ENCODE measurements at regions of chr2 and their contacts with region 1.

Region 1: DNA sequence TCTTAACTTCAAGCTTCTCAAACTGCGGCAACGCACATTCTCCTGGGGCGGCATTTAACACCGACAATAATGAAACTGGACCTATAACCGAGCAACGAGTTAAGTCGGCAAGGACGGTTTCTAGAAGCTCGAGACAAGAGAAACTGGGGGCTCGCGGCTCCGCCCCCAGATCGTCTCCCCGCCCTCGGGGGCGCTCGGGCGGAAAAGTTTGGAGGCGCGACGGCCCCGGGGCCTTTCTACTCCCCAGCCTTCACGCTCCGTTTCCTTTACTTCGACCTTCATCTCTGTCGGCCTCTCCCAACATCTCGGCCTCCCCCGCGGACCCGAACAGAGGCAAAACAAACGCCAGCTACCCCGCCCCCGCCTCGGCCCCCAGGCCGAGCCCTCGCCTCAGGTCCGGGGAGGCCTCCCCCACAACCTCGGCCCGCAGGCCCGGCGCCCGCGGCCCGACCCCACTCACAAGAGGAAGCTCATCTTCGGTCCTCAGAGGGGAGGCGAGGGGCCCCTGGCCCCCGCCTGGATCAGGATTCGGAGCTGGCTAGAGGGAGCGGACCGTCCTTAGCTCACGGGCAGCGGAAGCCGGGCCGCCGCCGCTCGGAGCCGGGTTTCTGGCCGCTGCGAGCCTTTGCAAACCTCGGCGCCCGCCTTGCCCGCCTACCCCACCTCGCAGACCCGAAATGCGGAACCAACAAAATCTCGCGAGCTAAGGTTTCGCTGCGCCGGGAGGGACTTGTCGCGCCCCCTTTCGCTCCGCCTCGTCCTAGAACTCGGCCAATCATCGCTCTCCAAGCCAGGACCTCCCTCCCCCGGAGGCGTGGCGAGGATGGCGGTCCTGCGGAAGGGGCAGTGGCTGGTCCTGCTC is at the start of gene MOB1A:
- DNase-seq: peak; percentile 99
- H3K4me3 Mint-ChIP-seq: peak within 1 kb of the TSS; percentile 86
- H3K27ac Mint-ChIP-seq: peak within 1 kb of the TSS; percentile 92
- H3K4me1 Mint-ChIP-seq: peaks cover 38% of the 10 kb centered on the region
- H3K27me3 Mint-ChIP-seq: no peaks in the 10 kb centered on the region

Region 2: GRCh38 chr2:74128206-74128605 is 50.2 kb before region 1 on chr2:
- CTCF ChIA-PET with region 1: no interaction called
- DNase-seq: no peak
- H3K4me3 Mint-ChIP-seq: no peak overlapping the region
- H3K27ac Mint-ChIP-seq: no peak overlapping the region
- H3K4me1 Mint-ChIP-seq: peaks cover 3% of the 10 kb centered on the region
- H3K27me3 Mint-ChIP-seq: peaks cover 49% of the 10 kb centered on the region

Region 3: DNA sequence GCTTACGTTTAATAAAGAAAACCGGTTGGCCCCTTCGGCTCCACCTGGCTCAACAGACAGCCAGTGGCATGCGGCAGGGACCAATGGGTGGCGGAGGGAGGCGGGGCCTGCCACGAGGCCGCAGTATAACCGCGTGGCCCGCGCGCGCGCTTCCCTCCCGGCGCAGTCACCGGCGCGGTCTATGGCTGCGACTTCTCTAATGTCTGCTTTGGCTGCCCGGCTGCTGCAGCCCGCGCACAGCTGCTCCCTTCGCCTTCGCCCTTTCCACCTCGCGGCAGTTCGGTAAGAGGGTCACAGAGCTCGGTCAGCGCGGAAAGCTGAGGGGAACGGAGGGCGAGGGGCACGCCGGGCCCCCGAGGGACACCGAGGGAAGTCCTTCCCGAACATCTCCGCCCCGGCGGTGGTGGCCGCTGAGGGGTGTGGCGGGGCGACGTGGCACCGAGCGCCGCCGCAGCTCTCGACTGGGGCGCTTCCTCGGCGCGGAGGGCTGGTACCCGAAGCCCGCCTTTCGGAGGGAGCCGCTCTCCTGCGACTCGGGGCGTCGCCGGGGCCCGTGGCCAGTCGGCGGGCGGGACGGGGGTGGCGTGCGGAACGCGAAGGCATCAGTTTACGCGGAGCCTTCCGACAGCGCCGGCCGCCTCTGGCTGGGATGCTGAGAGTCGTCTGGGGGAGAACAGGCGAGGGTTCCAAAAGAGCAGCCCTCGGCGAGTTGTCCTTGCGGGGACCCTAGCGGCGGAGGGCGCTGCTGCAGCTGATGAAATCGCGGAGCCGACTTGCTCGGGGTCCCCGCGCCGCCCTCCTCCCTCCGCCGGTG is 20.2 kb after region 1 on chr2 and contains the start of gene MTHFD2:
- CTCF ChIA-PET with region 1: interaction called, 32 read pairs
- DNase-seq: peak; percentile 94
- H3K4me3 Mint-ChIP-seq: peak within 1 kb of the TSS; percentile 94
- H3K27ac Mint-ChIP-seq: peak within 1 kb of the TSS; percentile 99
- H3K4me1 Mint-ChIP-seq: peaks cover 55% of the 10 kb centered on the region
- H3K27me3 Mint-ChIP-seq: peaks cover 6% of the 10 kb centered on the region

Region 4: GRCh38 chr2:74206180-74206688 is 27.8 kb after region 1 on chr2:
- CTCF ChIA-PET with region 1: interaction called, 13 read pairs
- DNase-seq: peak; percentile 65
- H3K4me3 Mint-ChIP-seq: peak overlapping the region; percentile 56
- H3K27ac Mint-ChIP-seq: peak overlapping the region; percentile 98
- H3K4me1 Mint-ChIP-seq: peaks cover 72% of the 10 kb centered on the region
- H3K27me3 Mint-ChIP-seq: no peaks in the 10 kb centered on the region

Measured in activated naive CD4-positive, alpha-beta T cell treated with anti-CD3 and anti-CD28 coated beads, Interleukin-2, amount 10 ng/mL, durations not matched to agents 7 days and 5 days (primary cell).